Posterior vena cava (tissue), 2 donors: ENCODE measurements at regions of chr13 and their contacts with region 1.

Region 1: GRCh38 chr13:37348916-37349643 is 243.6 kb upstream of the CSNK1A1L start:
- DNase-seq: no peak

Region 2: DNA sequence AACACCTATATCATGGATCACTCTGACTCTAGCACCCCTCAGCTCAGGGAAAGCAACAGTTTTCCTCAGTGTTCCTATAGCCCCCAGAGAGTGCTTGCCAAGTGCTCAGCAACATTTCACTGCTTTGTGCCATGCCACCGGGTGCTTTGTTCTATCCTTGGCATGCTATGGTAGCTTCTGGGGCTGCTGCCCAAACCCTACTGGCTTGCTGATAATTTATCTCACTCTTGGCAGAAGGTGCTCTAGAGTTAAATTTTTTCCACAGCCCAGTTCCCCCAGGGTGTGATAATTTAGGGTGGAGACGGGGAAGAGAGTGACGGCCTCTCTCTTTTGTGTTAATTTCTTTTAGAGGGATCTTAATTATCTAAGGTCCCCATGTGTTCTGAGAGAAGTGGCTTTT is 231.1 kb before region 1 on chr13:
- intact Hi-C with region 1: loop called in 1 of 2 experiments (anchors 10 kb)
- DNase-seq: no peak